ENCODE measurements at regions of chr5 and their contacts with region 1.

Region 1: DNA sequence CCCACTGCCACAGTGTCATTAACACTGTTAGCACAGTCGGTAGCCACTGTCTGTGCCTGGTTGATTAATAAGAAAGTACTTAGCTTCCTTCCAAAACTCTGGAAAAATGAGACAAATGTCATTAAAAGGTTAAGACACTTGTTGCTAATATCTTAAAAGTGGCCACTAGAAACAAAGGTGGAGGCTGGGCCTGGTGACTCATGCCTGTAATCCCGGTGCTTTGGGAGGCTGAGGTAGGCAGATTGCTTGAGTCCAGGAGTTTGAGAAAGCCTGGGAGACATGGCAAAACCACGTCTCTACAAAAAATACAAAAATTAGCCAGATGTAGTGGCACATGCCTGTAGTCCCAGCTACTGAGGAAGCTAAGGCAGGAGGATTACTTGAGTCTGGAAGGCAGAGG is 194.1 kb downstream of the PDZD2 start:
- DNase-seq: no peak
- H3K4me3 ChIP-seq: no peak overlapping the region
- H3K27ac ChIP-seq: no peak overlapping the region
- H3K4me1 ChIP-seq: no peaks in the 10 kb centered on the region
- H3K27me3 ChIP-seq: no peaks in the 10 kb centered on the region
- CTCF ChIP-seq: no peak
- POLR2A ChIP-seq: no peak

Region 2: GRCh38 chr5:31921852-31922305 is 88.9 kb after region 1 on chr5:
- intact Hi-C with region 1: loop called in 1 of 2 experiments (anchors 10 kb)
- DNase-seq: no peak
- H3K4me3 ChIP-seq: no peak overlapping the region
- H3K27ac ChIP-seq: no peak overlapping the region
- H3K4me1 ChIP-seq: no peaks in the 10 kb centered on the region
- H3K27me3 ChIP-seq: no peaks in the 10 kb centered on the region
- CTCF ChIP-seq: no peak
- POLR2A ChIP-seq: no peak